ENCODE measurements at regions of chr16 and their contacts with region 1.

Region 1: DNA sequence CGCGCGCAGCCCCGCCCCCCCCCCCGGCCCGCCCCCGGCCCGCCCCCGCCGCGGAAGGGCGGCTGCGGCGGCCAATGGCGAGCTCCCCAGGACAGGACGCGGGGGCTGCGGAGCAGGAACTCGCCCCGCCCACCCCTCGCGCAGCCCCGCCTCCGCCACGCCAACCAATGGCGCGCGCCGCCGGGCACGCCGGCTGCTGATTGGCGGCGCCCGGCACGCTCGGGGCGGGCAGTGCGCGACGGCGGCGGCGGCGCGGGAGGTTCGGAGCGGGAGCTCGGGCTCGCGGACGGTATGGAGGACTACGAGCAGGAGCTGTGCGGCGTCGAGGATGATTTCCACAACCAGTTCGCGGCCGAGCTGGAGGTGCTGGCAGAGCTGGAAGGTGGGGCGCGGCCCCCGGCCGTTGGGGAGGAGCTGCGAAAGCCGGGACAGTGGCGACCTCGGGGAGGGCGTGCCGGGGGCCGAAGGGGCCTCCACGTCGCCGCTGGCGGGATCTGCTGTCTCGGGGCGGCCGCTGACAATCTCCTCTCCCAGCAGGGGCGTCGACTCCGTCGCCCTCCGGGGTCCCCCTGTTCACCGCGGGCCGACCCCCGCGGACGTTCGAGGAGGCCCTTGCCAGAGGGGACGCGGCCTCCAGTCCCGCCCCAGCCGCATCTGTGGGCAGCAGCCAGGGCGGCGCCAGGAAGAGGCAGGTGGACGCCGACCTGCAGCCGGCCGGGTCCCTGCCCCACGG is at the start of gene CHTF18:
- DNase-seq: peak; percentile 86 to 92
- ATAC-seq: peak; percentile 51 to 75
- H3K4me3 ChIP-seq: peak within 1 kb of the TSS; percentile 93
- H3K27ac ChIP-seq: peak within 1 kb of the TSS; percentile 84 to 92
- H3K4me1 ChIP-seq: peaks cover 24% of the 10 kb centered on the region
- CTCF ChIP-seq: no peak
- EP300 ChIP-seq: no peak
- POLR2A ChIP-seq: peak; percentile 63
- RAD21 ChIP-seq: no peak
- polyA plus RNA-seq, gene CHTF18: 4.8 and 5.1 TPM in 2 replicates

Region 2: GRCh38 chr16:714558-715476 is 73.7 kb before region 1 on chr16 and contains the start of gene METRN:
- CTCF ChIA-PET with region 1: interaction called, 169 read pairs
- POLR2A ChIA-PET with region 1: interaction called, 6 read pairs
- DNase-seq: peak; percentile 83 to 90
- ATAC-seq: peak; percentile 37 to 61
- H3K4me3 ChIP-seq: peak within 1 kb of the TSS; percentile 64
- H3K27ac ChIP-seq: peak within 1 kb of the TSS; percentile 80 to 99
- H3K4me1 ChIP-seq: peaks cover 84% of the 10 kb centered on the region
- CTCF ChIP-seq: no peak
- EP300 ChIP-seq: no peak
- POLR2A ChIP-seq: peak; percentile 28; the same call in 1 of the 2 replicates
- RAD21 ChIP-seq: no peak
- polyA plus RNA-seq, gene METRN: 33.8 and 41.0 TPM in 2 replicates

Region 3: DNA sequence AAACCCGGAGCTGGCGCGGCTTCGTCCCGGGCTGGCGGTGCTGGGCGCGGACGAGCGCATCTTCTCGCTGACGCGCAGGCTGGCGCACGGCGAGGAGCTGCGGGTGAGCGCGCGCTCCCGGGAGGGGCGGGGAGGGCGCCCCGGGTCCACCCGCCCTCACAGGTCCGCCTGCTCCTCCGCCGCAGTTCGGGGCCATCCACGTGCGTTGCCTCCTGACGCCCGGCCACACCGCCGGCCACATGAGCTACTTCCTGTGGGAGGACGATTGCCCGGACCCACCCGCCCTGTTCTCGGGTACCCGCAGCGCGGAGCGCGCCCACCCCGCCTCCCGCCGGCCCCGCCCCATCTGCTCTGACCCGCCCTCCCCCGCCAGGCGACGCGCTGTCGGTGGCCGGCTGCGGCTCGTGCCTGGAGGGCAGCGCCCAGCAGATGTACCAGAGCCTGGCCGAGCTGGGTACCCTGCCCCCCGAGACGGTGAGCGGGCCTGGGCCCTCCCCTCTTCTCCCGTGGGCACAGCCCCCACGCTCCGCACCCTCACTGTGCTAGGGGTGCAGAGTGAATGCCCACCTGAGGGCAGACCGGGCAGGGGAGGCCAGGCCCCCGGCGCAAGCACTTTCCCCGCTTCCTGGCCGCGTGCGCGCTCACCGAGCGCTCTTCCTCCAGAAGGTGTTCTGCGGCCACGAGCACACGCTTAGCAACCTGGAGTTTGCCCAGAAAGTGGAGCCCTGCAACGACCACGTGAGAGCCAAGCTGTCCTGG is 60.2 kb before region 1 on chr16:
- CTCF ChIA-PET with region 1: interaction called, 205 read pairs
- POLR2A ChIA-PET with region 1: no interaction called
- DNase-seq: peak; percentile 63 to 88
- ATAC-seq: peak; percentile 15 to 61
- H3K4me3 ChIP-seq: peak overlapping the region; percentile 60
- H3K27ac ChIP-seq: peak overlapping the region; percentile 89 to 91
- H3K4me1 ChIP-seq: peaks cover 13% of the 10 kb centered on the region
- CTCF ChIP-seq: no peak
- EP300 ChIP-seq: no peak
- POLR2A ChIP-seq: no peak; the same call in 1 of the 2 replicates
- RAD21 ChIP-seq: no peak

Region 4: DNA sequence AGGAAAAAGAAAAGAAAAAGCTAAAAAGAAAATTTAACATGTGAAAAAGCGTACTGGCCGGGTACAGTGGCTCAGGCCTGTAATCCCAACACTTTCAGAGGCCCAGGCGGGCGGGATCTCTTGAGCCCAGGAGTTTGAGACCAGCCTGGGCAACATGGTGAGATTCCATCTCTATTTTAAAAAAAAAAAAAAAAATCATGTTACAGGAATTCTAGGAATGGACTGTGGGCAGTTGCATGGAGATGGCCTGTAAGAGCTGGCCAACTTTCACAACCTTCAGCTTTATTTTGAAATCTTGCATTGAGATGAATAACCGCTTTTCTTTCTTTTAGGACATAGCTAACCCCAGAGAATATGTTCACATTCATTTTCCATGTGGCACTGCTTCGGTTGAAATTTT is 39.6 kb before region 1 on chr16:
- CTCF ChIA-PET with region 1: interaction called, 205 read pairs
- POLR2A ChIA-PET with region 1: interaction called, 4 read pairs
- DNase-seq: no peak
- ATAC-seq: peak in 1 of 2 experiments; percentile 35; a peak in 2 of 6 replicates
- H3K4me3 ChIP-seq: no peak overlapping the region
- H3K27ac ChIP-seq: no peak overlapping the region
- H3K4me1 ChIP-seq: no peaks in the 10 kb centered on the region
- CTCF ChIP-seq: no peak
- EP300 ChIP-seq: no peak
- POLR2A ChIP-seq: no peak
- RAD21 ChIP-seq: no peak

Region 5: DNA sequence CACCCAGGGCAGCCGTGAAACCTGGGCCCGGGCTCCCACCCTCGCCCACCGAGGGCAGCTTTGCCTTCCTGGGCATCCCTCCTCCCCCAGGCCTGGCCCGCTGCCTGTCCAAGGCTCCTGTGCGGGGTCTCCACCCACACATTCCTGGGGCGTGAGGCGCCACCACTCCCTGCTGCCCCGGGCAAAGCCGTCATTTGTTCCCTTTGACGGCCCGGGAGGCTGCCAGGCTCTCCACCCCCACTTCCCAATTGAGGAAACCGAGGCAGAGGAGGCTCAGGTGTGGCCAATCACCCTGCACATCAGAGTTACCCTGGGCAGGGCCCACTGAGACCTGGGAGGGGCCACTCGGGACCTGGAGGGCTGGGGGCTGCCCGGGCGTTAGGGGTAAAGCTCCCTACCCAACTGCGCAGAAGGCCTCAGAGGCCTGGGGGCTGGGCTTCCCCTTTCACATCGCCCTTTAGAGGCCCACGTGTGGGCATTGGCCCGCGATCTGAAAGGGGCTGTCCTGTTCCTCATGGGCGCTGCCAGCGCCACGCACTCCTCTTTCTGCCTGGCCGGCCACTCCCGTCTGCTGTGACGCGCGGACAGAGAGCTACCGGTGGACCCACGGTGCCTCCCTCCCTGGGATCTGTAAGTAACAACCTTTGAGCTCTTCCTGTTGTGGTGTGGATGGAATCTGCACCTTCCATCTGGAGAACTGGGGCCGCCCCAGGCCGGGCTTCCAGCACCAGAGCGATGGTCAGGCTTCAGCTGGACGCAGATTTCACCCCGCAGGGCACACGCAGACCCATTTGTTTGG is 27.8 kb before region 1 on chr16 and contains the start of gene MSLN:
- CTCF ChIA-PET with region 1: interaction called, 105 read pairs
- POLR2A ChIA-PET with region 1: no interaction called
- DNase-seq: peak in 1 of 2 experiments; percentile 71
- ATAC-seq: peak; percentile 22 to 62; a peak in 3 of 6 replicates
- H3K4me3 ChIP-seq: no peak within 1 kb of the TSS
- H3K27ac ChIP-seq: peak within 1 kb of the TSS; percentile 66 to 79; a peak in 5 of 6 replicates
- H3K4me1 ChIP-seq: peaks cover 35% of the 10 kb centered on the region
- CTCF ChIP-seq: no peak
- EP300 ChIP-seq: no peak
- POLR2A ChIP-seq: no peak
- RAD21 ChIP-seq: no peak
- polyA plus RNA-seq, gene MSLN: 1.8 and 2.4 TPM in 2 replicates

Region 6: DNA sequence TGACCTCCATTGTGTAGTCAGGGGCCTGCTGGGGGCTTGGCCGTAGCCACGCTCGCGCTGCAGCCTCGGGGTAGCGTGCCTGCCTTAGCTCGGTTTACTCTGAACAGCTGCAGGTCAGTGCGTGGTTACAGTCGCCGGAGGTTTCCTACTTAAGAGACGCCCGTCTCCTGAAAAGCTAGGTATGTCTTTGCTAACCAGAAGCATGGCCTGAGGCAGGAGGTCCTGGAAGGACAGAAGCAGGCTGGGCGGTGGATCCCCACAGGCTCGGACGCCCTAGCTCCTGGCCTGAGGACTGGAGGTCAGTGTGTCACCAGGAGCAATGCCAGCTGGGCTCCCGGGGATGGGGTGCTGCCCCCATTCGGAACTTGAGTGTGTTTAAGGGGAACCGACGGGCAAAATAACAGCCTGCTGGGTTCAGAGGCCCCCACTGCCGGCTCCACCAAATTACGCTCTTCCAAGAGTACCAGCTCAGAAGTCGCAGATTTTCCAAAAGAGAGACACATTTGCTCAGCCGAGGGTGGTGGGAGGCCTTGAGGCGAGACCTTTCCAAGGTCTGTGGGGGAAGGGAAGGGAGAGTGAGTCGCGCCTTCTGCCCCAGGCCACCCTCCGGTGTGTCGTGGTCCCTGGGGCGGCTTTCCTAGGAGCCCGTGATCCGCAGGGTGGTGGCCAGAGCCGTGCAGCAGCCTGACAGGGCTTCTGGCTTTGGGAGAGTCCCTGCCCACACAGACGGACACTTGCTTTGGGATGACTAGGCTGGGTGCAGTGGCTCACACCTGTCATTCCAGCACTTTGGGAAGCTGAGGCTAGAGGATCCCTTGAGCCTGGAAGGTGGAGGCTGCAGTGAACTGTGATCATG is 15.9 kb after region 1 on chr16:
- CTCF ChIA-PET with region 1: interaction called, 10 read pairs
- POLR2A ChIA-PET with region 1: interaction called, 5 read pairs
- DNase-seq: no peak
- ATAC-seq: no peak
- H3K4me3 ChIP-seq: no peak overlapping the region
- H3K27ac ChIP-seq: no peak overlapping the region
- H3K4me1 ChIP-seq: peaks cover 19% of the 10 kb centered on the region
- CTCF ChIP-seq: no peak
- EP300 ChIP-seq: no peak
- POLR2A ChIP-seq: no peak
- RAD21 ChIP-seq: no peak

Measured in A549 (cell line).